ENCODE measurements at regions of chr14 and their contacts with region 1.

Region 1: DNA sequence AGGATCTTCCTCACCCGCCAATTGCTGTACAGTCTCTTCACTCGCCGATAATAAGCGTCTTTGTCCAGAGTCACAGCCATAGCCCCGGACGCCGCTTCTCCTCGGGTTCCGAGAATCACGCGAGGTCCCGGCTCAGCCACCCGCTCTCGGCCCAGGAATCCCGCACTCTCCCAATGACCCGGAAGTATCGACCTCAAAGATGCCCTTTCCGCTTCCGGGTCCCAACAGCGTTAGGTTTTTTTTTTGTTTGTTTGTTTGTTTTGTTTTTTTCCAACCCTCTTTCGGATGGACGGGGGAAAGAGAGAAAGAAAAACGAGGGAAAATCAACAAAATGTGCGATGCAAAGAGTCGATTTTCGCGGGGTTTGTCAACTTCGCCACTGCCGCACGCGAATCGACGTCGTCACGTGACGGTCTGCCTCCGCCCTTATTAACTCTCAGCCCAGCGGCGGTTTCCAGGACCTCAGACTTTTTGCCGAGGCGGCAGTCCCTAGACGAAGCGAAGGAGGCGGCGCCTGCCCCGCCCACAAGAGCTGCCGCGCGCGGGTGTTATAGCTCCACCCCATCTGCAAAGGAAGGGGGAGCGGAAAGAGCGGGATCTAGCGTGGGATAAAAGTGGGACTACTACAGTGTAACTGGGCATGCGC is at the start of gene SUPT16H:
- DNase-seq: peak; percentile 99
- ATAC-seq: peak; percentile 99
- total RNA-seq, gene SUPT16H: 26.0 TPM

Region 2: DNA sequence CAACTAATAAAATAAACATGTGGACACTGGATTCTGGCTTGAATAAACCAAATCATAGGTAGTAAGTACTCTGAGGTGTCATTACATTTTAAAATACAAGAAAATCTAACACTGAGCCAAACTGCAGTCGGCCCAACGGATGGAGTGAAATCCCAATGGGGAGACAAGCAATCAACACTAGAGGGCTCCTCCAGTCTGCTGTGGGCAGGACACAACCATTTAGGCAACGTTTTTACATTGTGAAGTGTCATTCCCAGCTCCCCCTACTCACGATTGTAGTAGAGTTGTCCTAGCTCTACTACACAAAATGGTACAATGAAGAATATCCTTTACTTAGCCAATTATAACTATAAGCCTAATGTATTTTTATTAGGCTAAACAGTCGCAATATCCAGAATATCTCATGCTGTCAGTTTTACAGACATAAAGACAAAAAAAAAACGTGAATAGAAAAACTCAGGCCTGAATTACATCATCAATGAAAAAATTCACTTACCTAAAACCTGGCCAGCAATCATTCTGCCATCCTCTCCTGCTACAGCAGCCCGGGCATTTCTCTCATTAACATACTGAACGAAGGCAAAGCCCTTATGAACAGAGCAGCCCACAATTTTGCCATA is 150.4 kb before region 1 on chr14:
- intact Hi-C with region 1: loop called (anchors 5 kb)
- DNase-seq: no peak
- ATAC-seq: peak; percentile 58

Region 3: DNA sequence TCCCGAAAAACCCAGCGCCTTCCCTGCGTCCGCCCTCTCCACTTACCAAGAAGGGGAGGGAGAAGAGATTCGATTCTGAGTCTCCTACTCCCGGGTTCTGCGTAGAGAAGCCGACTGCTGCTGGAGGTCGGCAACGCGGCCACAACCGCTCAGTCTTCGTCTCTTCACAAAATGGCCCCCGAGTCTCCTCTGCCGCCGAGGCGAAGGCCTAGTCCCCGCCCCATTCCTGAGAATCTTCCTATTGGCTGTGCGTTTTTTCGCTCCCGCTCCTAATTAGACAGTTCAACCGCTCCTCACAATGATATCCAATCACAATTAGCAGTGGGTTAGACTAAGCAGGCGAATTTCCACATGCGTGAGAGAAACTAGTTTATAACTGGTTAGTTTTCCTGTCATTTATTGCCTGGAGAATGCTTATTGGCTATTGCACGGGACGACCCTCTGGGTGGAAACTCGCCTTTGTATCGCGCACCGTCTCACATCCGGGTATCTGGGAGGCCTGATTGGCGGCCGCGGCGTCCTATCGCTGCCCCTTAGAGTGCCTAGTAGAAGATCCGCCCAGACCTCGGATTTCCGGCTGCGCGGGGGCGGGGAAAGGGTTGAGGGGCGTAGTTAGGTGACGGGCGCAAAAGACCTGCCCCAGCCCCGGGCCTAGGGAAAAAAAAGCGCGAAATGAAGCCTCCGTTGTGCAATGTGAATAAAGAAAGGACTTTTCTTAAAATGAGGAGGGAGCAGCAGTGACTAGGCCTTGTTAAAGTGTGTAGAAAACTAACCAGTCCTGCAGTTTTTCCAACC is 114.5 kb before region 1 on chr14 and contains the start of gene HNRNPC:
- intact Hi-C with region 1: loop called (anchors 10 kb)
- DNase-seq: peak; percentile 100
- ATAC-seq: peak; percentile 99
- total RNA-seq, gene HNRNPC: 266 TPM

Region 4: GRCh38 chr14:21476925-21477681 is 93.1 kb after region 1 on chr14 and contains the starts of genes RAB2B and TOX4:
- intact Hi-C with region 1: loop called (anchors 2 kb)
- DNase-seq: peak; percentile 96
- ATAC-seq: peak; percentile 100
- total RNA-seq, gene RAB2B: 15.1 TPM
- total RNA-seq, gene TOX4: 86.5 TPM

Measured in Right ventricle myocardium inferior (tissue), 1 donor.